Mammary epithelial cell (primary cell): ENCODE measurements at regions of chr1 and their contacts with region 1.

Region 1: DNA sequence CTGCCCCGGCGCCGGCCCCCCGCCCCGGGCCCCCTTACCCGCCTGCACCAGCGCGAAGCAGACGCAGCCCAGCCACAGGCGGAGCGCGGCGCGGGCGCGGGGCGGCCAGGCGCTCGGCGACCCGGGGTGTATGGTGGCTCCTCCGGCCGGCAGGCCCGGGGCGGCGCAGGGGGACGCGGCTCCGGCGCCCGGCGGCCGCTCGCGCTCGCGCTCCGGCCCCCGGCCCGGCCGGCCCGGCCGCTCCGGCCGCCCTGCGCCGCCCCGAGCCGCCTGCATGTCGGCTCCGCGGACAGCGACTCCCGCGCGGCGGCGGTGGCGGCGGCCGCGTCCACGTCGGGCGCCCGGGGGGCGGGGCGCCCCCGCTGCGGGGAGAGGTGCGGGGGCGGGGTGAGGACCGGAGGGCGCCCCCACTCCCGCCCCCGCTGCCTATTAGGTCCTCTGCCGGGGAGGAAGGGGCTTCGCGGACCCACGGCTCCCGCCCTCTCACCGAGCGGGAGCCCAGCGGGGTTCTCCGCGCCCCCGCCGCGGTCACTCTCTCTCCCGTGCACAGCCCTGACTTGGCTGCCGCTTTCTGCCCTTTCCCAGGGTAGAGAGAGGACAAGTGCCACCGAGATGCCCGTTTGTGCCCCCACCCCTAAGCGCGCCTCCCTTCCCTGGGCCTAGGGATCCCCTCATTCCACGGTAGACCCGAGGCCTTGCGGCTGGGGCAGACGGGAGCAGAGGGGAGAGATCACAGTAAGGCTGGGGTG is at the start of gene FNDC5:
- DNase-seq: no peak
- H3K4me3 ChIP-seq: peak within 1 kb of the TSS in 2 of 3 experiments; percentile 30 to 40
- H3K27ac ChIP-seq: no peak within 1 kb of the TSS
- H3K4me1 ChIP-seq: no peaks in the 10 kb centered on the region
- H3K27me3 ChIP-seq: peaks cover 8% of the 10 kb centered on the region
- CTCF ChIP-seq: no peak
- total RNA-seq, gene FNDC5: not detected

Region 2: GRCh38 chr1:32695098-32695904 is 175.5 kb before region 1 on chr1:
- CTCF ChIA-PET with region 1: no interaction called
- dilution Hi-C with region 1: loop called (anchors 10 kb)
- in situ Hi-C with region 1: no loop called
- intact Hi-C with region 1: no loop called
- DNase-seq: peak; percentile 6
- H3K4me3 ChIP-seq: no peak overlapping the region
- H3K27ac ChIP-seq: no peak overlapping the region
- H3K4me1 ChIP-seq: no peaks in the 10 kb centered on the region
- H3K27me3 ChIP-seq: no peaks in the 10 kb centered on the region
- CTCF ChIP-seq: no peak

Region 3: GRCh38 chr1:32848354-32849063 is 22.3 kb before region 1 on chr1:
- CTCF ChIA-PET with region 1: no interaction called
- dilution Hi-C with region 1: no loop called
- in situ Hi-C with region 1: no loop called
- intact Hi-C with region 1: no loop called
- DNase-seq: no peak
- H3K4me3 ChIP-seq: no peak overlapping the region
- H3K27ac ChIP-seq: no peak overlapping the region
- H3K4me1 ChIP-seq: no peaks in the 10 kb centered on the region
- H3K27me3 ChIP-seq: no peaks in the 10 kb centered on the region
- CTCF ChIP-seq: no peak